ENCODE measurements at regions of chr3 and their contacts with region 1.

Region 1: DNA sequence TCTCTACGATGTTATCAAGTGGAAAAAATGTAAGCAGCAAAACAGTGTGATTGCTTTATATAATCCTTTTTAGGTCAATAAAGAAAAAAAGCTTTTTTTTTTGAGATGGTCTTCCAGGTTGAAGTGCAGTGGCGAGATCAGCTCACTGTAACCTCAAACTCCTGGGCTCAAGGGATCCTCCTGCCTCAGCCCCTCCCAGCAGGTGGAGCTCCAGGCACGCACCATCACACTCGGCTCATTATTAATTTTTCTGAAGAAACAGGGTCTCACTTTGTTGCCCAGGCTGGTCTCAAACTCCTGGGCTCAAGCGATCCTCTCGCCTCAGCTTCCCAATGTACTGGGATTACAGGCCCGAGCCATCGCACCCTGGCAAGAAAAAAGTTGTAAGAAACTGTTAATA is 17.3 kb downstream of the RNF168 start:
- DNase-seq: no peak
- ATAC-seq: no peak
- H3K4me3 ChIP-seq: no peak overlapping the region
- H3K27ac ChIP-seq: no peak overlapping the region
- H3K4me1 ChIP-seq: no peaks in the 10 kb centered on the region
- H3K27me3 ChIP-seq: no peaks in the 10 kb centered on the region
- CTCF ChIP-seq: peak; percentile 32 to 36 (median 34); a peak in 5 of 6 replicates
- EP300 ChIP-seq: no peak
- POLR2A ChIP-seq: no peak
- RAD21 ChIP-seq: peak; percentile 51; the same call in 1 of the 2 replicates

Region 2: GRCh38 chr3:196518966-196519717 is 32.9 kb after region 1 on chr3:
- CTCF ChIA-PET with region 1: interaction called, 27 read pairs
- POLR2A ChIA-PET with region 1: no interaction called
- RAD21 ChIA-PET with region 1: interaction called, 11 read pairs
- SMC1A ChIA-PET with region 1: interaction called, 4 read pairs
- in situ Hi-C with region 1: no loop called
- intact Hi-C with region 1: no loop called
- DNase-seq: no peak
- ATAC-seq: peak; percentile 90
- H3K4me3 ChIP-seq: no peak overlapping the region
- H3K27ac ChIP-seq: no peak overlapping the region
- H3K4me1 ChIP-seq: no peaks in the 10 kb centered on the region
- H3K27me3 ChIP-seq: no peaks in the 10 kb centered on the region
- CTCF ChIP-seq: peak; percentile 47 to 50 (median 49)
- EP300 ChIP-seq: no peak
- POLR2A ChIP-seq: no peak
- RAD21 ChIP-seq: peak; percentile 74

Region 3: DNA sequence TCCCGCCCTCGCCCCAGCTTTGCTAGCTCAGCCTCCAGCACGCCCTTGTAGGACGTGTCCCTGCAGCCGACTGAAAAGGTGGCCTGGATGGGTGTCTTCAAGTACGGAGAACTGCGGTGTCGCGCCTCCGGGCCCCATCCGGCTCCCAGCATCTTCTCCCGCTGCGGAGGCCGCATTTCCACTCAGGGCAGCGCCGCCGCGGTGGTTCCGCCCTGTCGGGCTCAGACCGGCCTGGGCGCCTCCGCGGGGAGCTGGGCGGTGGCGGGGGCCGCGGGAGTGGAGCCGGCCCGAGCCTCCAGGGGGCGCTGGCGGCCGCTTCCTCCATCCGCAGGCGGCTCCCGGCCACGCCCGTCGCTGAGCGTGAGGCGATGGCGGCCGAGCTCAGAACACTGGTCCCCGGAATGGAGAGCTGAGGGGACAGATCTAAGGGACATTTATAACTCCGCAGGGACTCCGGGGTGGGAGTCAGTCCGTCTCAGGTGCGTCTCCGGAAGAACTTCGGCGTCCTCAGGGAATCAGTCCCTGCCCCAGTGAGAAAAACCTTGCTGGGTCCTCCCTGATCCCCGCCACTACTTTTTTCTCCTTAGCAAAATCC is 42.5 kb after region 1 on chr3:
- CTCF ChIA-PET with region 1: interaction called, 27 read pairs
- POLR2A ChIA-PET with region 1: interaction called, 8 read pairs
- RAD21 ChIA-PET with region 1: interaction called, 4 read pairs
- SMC1A ChIA-PET with region 1: no interaction called
- in situ Hi-C with region 1: no loop called
- intact Hi-C with region 1: no loop called
- DNase-seq: no peak
- ATAC-seq: peak; percentile 96
- H3K4me3 ChIP-seq: peak overlapping the region; percentile 69
- H3K27ac ChIP-seq: peak overlapping the region; percentile 96
- H3K4me1 ChIP-seq: peaks cover 13% of the 10 kb centered on the region
- H3K27me3 ChIP-seq: no peaks in the 10 kb centered on the region
- CTCF ChIP-seq: peak; percentile 49 to 84 (median 53); a peak in 5 of 6 replicates
- EP300 ChIP-seq: no peak
- POLR2A ChIP-seq: peak; percentile 94
- RAD21 ChIP-seq: peak; percentile 48

Measured in GM12878 (cell line).